ENCODE measurements at regions of chr3 and their contacts with region 1.

Region 1: GRCh38 chr3:102002056-102002455 is 152.7 kb downstream of the NFKBIZ start:
- DNase-seq: no peak
- ATAC-seq: no peak
- H3K4me3 ChIP-seq: no peak overlapping the region
- H3K4me3 Mint-ChIP-seq: no peak overlapping the region
- H3K27ac ChIP-seq: no peak overlapping the region
- H3K27ac Mint-ChIP-seq: no peak overlapping the region
- H3K4me1 ChIP-seq: no peaks in the 10 kb centered on the region
- H3K4me1 Mint-ChIP-seq: peaks cover 11% of the 10 kb centered on the region
- H3K27me3 ChIP-seq: no peaks in the 10 kb centered on the region
- H3K27me3 Mint-ChIP-seq: no peaks in the 10 kb centered on the region
- CTCF ChIP-seq: no peak

Region 2: DNA sequence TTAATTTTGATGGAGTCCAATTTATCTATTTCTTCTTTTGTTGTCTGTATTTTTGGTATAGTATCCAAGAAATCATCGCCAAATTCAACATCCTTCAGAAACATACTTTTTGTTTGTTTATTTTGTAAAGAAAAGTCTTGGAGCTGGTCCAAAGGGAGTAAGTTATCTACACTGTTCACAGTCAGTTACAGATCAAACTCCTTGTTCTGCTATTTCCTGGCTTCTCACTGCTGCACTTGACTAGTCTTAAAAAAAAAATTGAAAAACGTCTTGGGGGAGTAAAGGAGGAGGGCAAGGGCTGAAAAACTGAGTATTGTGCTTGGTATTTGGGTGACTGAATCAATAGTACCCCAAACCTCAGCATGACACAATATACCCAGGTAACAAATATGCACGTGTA is 47.1 kb before region 1 on chr3:
- CTCF ChIA-PET with region 1: no interaction called
- POLR2A ChIA-PET with region 1: no interaction called
- intact Hi-C with region 1: loop called in 1 of 2 experiments (anchors 1 kb)
- DNase-seq: no peak
- ATAC-seq: no peak
- H3K4me3 ChIP-seq: no peak overlapping the region
- H3K4me3 Mint-ChIP-seq: no peak overlapping the region
- H3K27ac ChIP-seq: no peak overlapping the region
- H3K27ac Mint-ChIP-seq: no peak overlapping the region
- H3K4me1 ChIP-seq: no peaks in the 10 kb centered on the region
- H3K4me1 Mint-ChIP-seq: no peaks in the 10 kb centered on the region
- H3K27me3 ChIP-seq: no peaks in the 10 kb centered on the region
- H3K27me3 Mint-ChIP-seq: no peaks in the 10 kb centered on the region
- CTCF ChIP-seq: no peak